IMR-90 (cell line): ENCODE measurements at regions of chr7 and their contacts with region 1.

Region 1: GRCh38 chr7:114026486-114027089 is 107.8 kb upstream of the PPP1R3A start:
- DNase-seq: peak; percentile 52
- ATAC-seq: no peak
- H3K4me3 ChIP-seq: no peak overlapping the region
- H3K27ac ChIP-seq: no peak overlapping the region
- H3K4me1 ChIP-seq: no peaks in the 10 kb centered on the region
- H3K27me3 ChIP-seq: no peaks in the 10 kb centered on the region
- CTCF ChIP-seq: peak; percentile 67
- POLR2A ChIP-seq: no peak
- RAD21 ChIP-seq: peak; percentile 66

Region 2: DNA sequence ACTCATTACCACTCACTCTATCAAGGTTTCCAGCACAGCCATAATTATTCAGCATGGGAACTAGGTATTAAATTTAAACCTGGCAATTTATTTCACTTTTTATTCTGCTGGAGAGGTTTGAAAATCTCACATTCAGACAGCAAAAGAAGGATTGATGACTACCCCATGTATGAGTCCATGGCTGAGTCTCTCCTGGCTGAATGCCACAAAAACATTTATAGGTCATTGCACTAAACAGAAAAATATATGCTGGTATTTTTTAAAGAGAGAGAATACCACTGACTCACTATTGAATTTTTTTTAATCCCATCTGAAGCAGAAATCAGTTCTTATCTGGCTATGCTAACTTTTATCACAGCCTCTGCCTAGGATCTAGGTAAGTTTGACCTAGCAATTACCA is 444.1 kb before region 1 on chr7:
- CTCF ChIA-PET with region 1: no interaction called
- POLR2A ChIA-PET with region 1: no interaction called
- dilution Hi-C with region 1: no loop called
- in situ Hi-C with region 1: no loop called
- intact Hi-C with region 1: no loop called
- DNase-seq: no peak
- ATAC-seq: no peak
- H3K4me3 ChIP-seq: no peak overlapping the region
- H3K27ac ChIP-seq: no peak overlapping the region
- H3K4me1 ChIP-seq: no peaks in the 10 kb centered on the region
- H3K27me3 ChIP-seq: no peaks in the 10 kb centered on the region
- CTCF ChIP-seq: no peak
- POLR2A ChIP-seq: no peak
- RAD21 ChIP-seq: no peak

Region 3: GRCh38 chr7:114414156-114415063 is 387.8 kb after region 1 on chr7 and contains the start of gene FOXP2:
- CTCF ChIA-PET with region 1: no interaction called
- POLR2A ChIA-PET with region 1: no interaction called
- dilution Hi-C with region 1: no loop called
- in situ Hi-C with region 1: no loop called
- intact Hi-C with region 1: loop called (anchors 5 kb)
- DNase-seq: peak; percentile 48
- ATAC-seq: peak; percentile 38
- H3K4me3 ChIP-seq: peak within 1 kb of the TSS; percentile 9; the same call in 1 of the 2 replicates
- H3K27ac ChIP-seq: peak within 1 kb of the TSS; percentile 57; the same call in 1 of the 2 replicates
- H3K4me1 ChIP-seq: peaks cover 7% of the 10 kb centered on the region
- H3K27me3 ChIP-seq: no peaks in the 10 kb centered on the region
- CTCF ChIP-seq: no peak
- POLR2A ChIP-seq: no peak
- RAD21 ChIP-seq: no peak
- total RNA-seq, gene FOXP2: 1.1 and 1.7 TPM in 2 replicates

Region 4: GRCh38 chr7:114539575-114539974 is 513.0 kb after region 1 on chr7:
- CTCF ChIA-PET with region 1: no interaction called
- POLR2A ChIA-PET with region 1: no interaction called
- dilution Hi-C with region 1: no loop called
- in situ Hi-C with region 1: no loop called
- intact Hi-C with region 1: loop called (anchors 10 kb)
- DNase-seq: peak; percentile 35
- ATAC-seq: peak; percentile 72
- H3K4me3 ChIP-seq: no peak overlapping the region
- H3K27ac ChIP-seq: no peak overlapping the region
- H3K4me1 ChIP-seq: no peaks in the 10 kb centered on the region
- H3K27me3 ChIP-seq: no peaks in the 10 kb centered on the region
- CTCF ChIP-seq: peak; percentile 51
- POLR2A ChIP-seq: no peak
- RAD21 ChIP-seq: peak; percentile 44

Region 5: GRCh38 chr7:114663502-114663901 is 636.9 kb after region 1 on chr7:
- CTCF ChIA-PET with region 1: no interaction called
- POLR2A ChIA-PET with region 1: no interaction called
- dilution Hi-C with region 1: no loop called
- in situ Hi-C with region 1: no loop called
- intact Hi-C with region 1: loop called (anchors 5 kb)
- DNase-seq: peak; percentile 34
- ATAC-seq: no peak
- H3K4me3 ChIP-seq: no peak overlapping the region
- H3K27ac ChIP-seq: no peak overlapping the region
- H3K4me1 ChIP-seq: no peaks in the 10 kb centered on the region
- H3K27me3 ChIP-seq: no peaks in the 10 kb centered on the region
- CTCF ChIP-seq: peak; percentile 37
- POLR2A ChIP-seq: no peak
- RAD21 ChIP-seq: peak; percentile 32; the same call in 1 of the 2 replicates